ENCODE measurements at regions of chr2 and their contacts with region 1.

Region 1: DNA sequence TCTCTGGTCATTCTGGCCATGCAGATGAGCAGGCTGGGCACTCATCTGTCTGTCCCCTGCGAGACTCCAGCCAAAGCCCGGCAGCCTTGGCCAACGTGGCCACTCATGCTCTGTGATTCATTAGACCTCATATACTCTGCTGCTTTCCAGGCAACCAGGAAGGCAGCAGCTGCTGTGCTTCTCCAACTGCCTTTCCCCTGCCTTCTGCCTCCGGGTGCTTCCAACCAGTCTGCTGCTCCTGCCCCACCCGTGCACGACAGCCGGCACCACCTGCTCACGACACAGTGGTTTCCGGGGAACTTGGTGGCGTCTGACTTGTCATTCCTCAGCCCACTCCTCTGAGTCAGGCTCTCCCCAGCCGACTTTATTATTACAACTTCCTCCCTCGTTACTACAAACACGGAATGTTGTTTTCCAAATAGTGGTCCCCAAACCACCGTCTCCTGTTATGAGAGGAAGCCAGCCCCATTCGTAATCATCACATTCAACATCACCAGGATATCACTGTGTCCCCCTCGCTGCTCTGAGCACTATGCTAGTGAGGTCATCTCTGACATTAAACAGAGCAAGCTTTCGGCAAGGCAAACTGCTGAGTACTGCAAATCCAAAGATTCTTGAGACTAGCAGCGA is 392.4 kb downstream of the ALK start:
- DNase-seq: no peak
- H3K4me3 ChIP-seq: no peak overlapping the region
- H3K27ac ChIP-seq: no peak overlapping the region
- H3K4me1 ChIP-seq: no peaks in the 10 kb centered on the region
- H3K27me3 ChIP-seq: no peaks in the 10 kb centered on the region
- CTCF ChIP-seq: no peak

Region 2: GRCh38 chr2:29420999-29421782 is 107.8 kb before region 1 on chr2:
- CTCF ChIA-PET with region 1: no interaction called
- dilution Hi-C with region 1: loop called (anchors 5 kb)
- in situ Hi-C with region 1: no loop called
- intact Hi-C with region 1: no loop called
- DNase-seq: no peak
- H3K4me3 ChIP-seq: no peak overlapping the region
- H3K27ac ChIP-seq: no peak overlapping the region
- H3K4me1 ChIP-seq: no peaks in the 10 kb centered on the region
- H3K27me3 ChIP-seq: no peaks in the 10 kb centered on the region
- CTCF ChIP-seq: no peak

Region 3: DNA sequence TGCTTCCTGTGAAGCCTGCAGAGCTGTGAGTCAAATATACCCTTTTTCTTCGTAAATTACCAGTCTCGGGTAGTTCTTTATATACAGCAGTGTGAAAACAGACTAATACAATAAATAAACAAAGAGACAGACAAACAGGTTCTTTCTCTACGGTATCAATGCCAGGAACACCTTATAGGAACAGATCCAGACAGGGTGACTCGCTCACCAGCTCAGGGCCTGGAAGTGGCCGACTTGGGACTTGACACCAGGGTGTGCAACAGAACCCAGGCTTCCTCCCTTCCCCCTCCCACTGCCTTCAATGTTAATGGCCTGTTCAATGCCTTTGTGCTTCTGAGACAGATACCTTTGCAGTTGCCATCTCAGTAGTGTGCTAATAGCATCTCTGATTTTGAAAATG is 82.8 kb after region 1 on chr2:
- CTCF ChIA-PET with region 1: no interaction called
- dilution Hi-C with region 1: no loop called
- in situ Hi-C with region 1: no loop called
- intact Hi-C with region 1: no loop called
- DNase-seq: no peak
- H3K4me3 ChIP-seq: no peak overlapping the region
- H3K27ac ChIP-seq: no peak overlapping the region
- H3K4me1 ChIP-seq: peaks cover 5% of the 10 kb centered on the region
- H3K27me3 ChIP-seq: no peaks in the 10 kb centered on the region
- CTCF ChIP-seq: no peak